A549 (cell line): ENCODE measurements at regions of chr17 and their contacts with region 1.

Region 1: DNA sequence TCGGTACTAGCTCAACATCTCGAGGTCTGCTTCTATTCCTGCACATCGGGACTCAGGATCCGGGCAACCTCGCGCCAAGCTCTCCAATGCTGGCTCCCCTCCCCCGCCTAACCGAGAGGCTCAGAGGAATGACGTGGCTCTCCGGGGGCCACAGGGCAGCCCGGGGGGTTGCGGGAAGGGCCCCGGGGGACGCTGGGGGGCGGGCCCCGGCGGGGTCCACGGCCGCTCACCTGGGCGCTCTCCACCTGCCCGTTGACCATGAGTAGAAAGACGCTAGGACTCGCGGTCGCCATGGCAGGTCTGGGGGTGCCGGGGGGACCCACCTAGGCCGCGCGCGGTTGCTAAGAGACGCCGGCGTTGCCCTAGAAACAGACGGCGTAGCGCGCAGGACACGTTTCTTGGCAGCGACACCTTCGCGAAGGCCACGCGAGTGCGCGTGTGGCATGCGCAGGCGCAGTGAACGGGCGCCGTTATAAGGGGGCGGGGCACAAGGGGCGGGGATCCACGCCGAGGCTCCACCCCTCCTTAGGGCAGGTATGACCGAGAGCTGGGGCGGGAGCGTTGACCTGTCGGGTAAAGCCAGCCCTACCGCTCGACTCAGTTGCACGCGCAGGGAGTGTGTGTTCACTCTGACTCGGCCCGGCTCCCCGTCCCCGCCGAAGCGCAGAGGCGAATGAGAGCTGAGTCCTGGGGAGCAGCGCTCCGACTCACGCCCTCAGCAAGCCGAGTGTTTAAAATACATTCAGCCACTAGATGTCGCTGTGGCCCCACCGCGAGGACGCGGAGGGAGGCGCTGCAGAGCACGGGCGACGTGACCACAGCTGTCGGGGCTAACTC is at the start of gene B9D1:
- DNase-seq: peak; percentile 97 to 99
- ATAC-seq: peak; percentile 79 to 93
- H3K4me3 ChIP-seq: peak within 1 kb of the TSS; percentile 82
- H3K27ac ChIP-seq: peak within 1 kb of the TSS; percentile 94 to 96
- H3K4me1 ChIP-seq: peaks cover 16% of the 10 kb centered on the region; the same call in 2 of the 3 replicates
- CTCF ChIP-seq: peak; percentile 100
- EP300 ChIP-seq: no peak
- POLR2A ChIP-seq: peak; percentile 47
- RAD21 ChIP-seq: peak; percentile 100
- polyA plus RNA-seq, gene B9D1: 60.6 and 65.6 TPM in 2 replicates

Region 2: GRCh38 chr17:19327039-19327776 is 35.3 kb before region 1 on chr17:
- CTCF ChIA-PET with region 1: interaction called, 20 read pairs
- POLR2A ChIA-PET with region 1: interaction called, 5 read pairs
- DNase-seq: peak; percentile 62 to 77
- ATAC-seq: peak; percentile 62 to 76
- H3K4me3 ChIP-seq: no peak overlapping the region
- H3K27ac ChIP-seq: peak overlapping the region; percentile 30 to 63
- H3K4me1 ChIP-seq: peaks cover 23% of the 10 kb centered on the region
- CTCF ChIP-seq: no peak
- EP300 ChIP-seq: no peak
- POLR2A ChIP-seq: no peak
- RAD21 ChIP-seq: no peak

Region 3: DNA sequence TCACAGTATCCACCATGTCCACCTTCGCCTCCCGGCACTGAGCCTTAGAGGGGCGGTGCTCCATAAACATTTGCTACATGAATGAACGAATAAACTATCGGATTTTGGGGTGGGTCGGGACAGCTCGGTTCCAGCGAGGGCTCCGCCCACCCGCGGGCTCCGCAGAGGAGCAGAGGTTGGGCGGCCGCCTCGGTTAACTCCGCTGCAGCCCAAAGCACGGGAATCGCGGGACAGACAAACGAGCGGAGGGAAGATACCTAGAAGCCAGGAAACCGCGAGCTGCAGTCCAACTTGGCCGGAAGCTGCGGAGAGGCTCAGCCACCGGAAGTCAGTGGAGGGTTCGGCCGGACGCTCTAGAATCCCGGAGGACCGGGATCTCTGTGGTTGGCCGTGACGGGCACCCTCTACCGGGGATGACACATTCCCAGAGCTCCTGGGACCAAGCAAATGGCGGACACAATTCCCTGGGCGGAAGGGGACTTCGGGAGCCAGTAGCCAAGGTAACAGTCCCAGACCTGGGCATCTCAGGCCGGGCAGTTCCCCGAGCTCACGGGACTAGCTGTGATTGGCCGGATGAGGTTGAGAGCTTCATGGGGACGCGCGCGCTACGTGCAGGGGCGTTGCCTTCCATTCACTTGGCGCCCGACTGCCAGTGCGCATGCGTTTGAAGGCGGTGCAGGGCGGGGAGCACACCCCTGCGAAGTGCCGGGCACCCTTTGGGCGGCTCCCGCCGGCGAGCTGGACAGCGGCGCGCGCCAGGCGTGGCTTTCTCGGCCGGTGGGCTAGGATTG is 15.3 kb after region 1 on chr17:
- CTCF ChIA-PET with region 1: interaction called, 148 read pairs
- POLR2A ChIA-PET with region 1: interaction called, 32 read pairs
- DNase-seq: peak; percentile 100
- ATAC-seq: peak; percentile 86 to 90
- H3K4me3 ChIP-seq: peak overlapping the region; percentile 80
- H3K27ac ChIP-seq: peak overlapping the region; percentile 90 to 91
- H3K4me1 ChIP-seq: peaks cover 16% of the 10 kb centered on the region
- CTCF ChIP-seq: no peak
- EP300 ChIP-seq: no peak
- POLR2A ChIP-seq: peak; percentile 52; the same call in 1 of the 2 replicates
- RAD21 ChIP-seq: no peak

Region 4: GRCh38 chr17:19418251-19418992 is 55.9 kb after region 1 on chr17:
- CTCF ChIA-PET with region 1: interaction called, 10 read pairs
- POLR2A ChIA-PET with region 1: no interaction called
- DNase-seq: peak in 1 of 2 experiments; percentile 28
- ATAC-seq: peak in 1 of 2 experiments; percentile 46; a peak in 2 of 6 replicates
- H3K4me3 ChIP-seq: no peak overlapping the region
- H3K27ac ChIP-seq: no peak overlapping the region
- H3K4me1 ChIP-seq: peaks cover 6% of the 10 kb centered on the region
- CTCF ChIP-seq: no peak
- EP300 ChIP-seq: no peak
- POLR2A ChIP-seq: no peak
- RAD21 ChIP-seq: no peak

Region 5: GRCh38 chr17:19457830-19458271 is 95.4 kb after region 1 on chr17:
- CTCF ChIA-PET with region 1: interaction called, 35 read pairs
- POLR2A ChIA-PET with region 1: no interaction called
- DNase-seq: no peak
- ATAC-seq: no peak
- H3K4me3 ChIP-seq: no peak overlapping the region
- H3K27ac ChIP-seq: no peak overlapping the region
- H3K4me1 ChIP-seq: no peaks in the 10 kb centered on the region
- CTCF ChIP-seq: no peak
- EP300 ChIP-seq: no peak
- POLR2A ChIP-seq: no peak
- RAD21 ChIP-seq: no peak

Region 6: DNA sequence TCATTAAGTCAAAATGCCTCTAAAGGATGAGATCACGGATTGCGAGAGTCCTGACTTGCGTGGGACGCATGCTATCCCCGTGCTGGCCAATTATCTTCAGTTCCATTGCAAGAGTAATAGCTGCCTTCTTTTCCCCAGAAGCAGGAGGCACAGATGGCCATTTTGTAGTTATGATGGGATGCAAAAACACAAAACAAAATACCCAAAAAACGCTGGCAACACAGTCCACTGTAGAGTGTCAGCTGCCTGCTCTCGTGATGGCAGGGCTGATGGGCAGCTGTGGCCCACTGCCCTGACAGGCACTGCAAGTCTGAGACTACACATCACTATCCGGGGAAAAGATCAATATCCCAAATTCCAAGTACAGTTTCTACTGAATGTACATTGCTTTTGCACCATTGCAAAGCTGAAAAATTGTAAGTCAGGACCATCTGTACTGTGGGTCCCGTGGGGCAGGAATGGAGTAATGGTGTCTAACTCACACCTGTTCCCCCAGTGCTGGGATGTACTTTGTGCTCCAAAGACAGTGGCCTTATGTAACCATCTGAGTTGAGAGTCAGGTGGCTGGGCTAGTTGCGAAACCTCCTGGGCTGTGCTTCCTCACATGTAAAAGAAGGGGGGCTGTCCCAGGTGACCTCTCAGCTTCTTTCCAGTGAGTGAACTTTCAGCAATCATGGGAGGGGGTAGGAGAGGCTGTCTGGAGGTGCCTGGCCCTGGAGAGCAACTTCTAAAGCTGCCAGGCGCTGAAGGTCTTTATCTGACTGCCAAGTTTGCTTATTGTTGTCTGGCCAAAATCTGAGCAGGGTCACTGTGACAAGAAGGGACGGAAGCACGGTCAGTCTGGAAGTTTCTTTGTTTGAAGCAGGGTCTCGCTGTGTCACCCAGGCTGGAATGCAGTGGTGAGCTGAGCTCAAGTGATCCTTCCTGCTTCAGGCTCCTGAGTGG is 175.9 kb after region 1 on chr17:
- CTCF ChIA-PET with region 1: no interaction called
- POLR2A ChIA-PET with region 1: no interaction called
- DNase-seq: no peak
- ATAC-seq: no peak
- H3K4me3 ChIP-seq: no peak overlapping the region
- H3K27ac ChIP-seq: no peak overlapping the region
- H3K4me1 ChIP-seq: peaks cover 7% of the 10 kb centered on the region; the same call in 2 of the 3 replicates
- CTCF ChIP-seq: no peak
- EP300 ChIP-seq: no peak
- POLR2A ChIP-seq: no peak
- RAD21 ChIP-seq: no peak

Region 7: GRCh38 chr17:19648475-19649406 is 286.2 kb after region 1 on chr17 and contains the start of gene ALDH3A2:
- CTCF ChIA-PET with region 1: interaction called, 10 read pairs
- POLR2A ChIA-PET with region 1: interaction called, 8 read pairs
- DNase-seq: peak; percentile 99
- ATAC-seq: peak; percentile 89 to 94
- H3K4me3 ChIP-seq: peak within 1 kb of the TSS; percentile 82
- H3K27ac ChIP-seq: peak within 1 kb of the TSS; percentile 95 to 96
- H3K4me1 ChIP-seq: peaks cover 67% of the 10 kb centered on the region
- CTCF ChIP-seq: peak; percentile 26; the same call in 1 of the 3 replicates
- EP300 ChIP-seq: no peak; a peak in 1 of 5 replicates
- POLR2A ChIP-seq: peak; percentile 77
- RAD21 ChIP-seq: peak; percentile 35 to 54; a peak in 4 of 5 replicates
- polyA plus RNA-seq, gene ALDH3A2: 195 and 225 TPM in 2 replicates